HepG2 (cell line): ENCODE measurements at regions of chr3 and their contacts with region 1.

Region 1: GRCh38 chr3:110397115-110397514 is 674.5 kb upstream of the NECTIN3 start:
- DNase-seq: peak; percentile 97
- ATAC-seq: peak; percentile 97
- H3K4me3 ChIP-seq: no peak overlapping the region
- H3K27ac ChIP-seq: peak overlapping the region; percentile 73
- H3K4me1 ChIP-seq: peaks cover 31% of the 10 kb centered on the region
- H3K27me3 ChIP-seq: no peaks in the 10 kb centered on the region
- CTCF ChIP-seq: no peak
- EP300 ChIP-seq: peak in 1 of 2 experiments; percentile 94; a peak in 2 of 4 replicates
- POLR2A ChIP-seq: no peak
- RAD21 ChIP-seq: no peak

Region 2: DNA sequence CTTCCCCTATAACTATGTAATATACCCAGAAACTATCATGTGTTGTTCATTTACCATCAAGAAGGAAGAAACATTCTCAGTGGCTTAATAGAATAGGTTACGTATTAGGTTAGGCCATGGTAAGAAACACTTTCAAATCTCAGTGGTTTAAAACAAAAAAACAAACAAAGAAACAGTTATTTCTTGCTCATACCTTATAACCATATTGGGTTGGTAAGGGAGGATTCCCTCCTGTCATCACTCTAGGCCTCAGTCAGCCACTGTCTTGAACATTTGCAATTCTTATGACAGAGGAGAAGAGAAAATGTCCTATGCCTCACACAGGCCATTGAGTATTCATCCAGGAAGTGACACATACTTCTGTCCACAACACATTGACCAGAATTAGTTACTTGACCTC is 53.2 kb before region 1 on chr3:
- CTCF ChIA-PET with region 1: no interaction called
- POLR2A ChIA-PET with region 1: interaction called, 4 read pairs
- in situ Hi-C with region 1: no loop called
- intact Hi-C with region 1: loop called (anchors 1 kb)
- DNase-seq: peak; percentile 19
- ATAC-seq: peak; percentile 39
- H3K4me3 ChIP-seq: no peak overlapping the region
- H3K27ac ChIP-seq: peak overlapping the region; percentile 51
- H3K4me1 ChIP-seq: peaks cover 42% of the 10 kb centered on the region
- H3K27me3 ChIP-seq: no peaks in the 10 kb centered on the region
- CTCF ChIP-seq: no peak
- EP300 ChIP-seq: no peak; a peak in 1 of 4 replicates
- POLR2A ChIP-seq: no peak
- RAD21 ChIP-seq: no peak

Region 3: GRCh38 chr3:110436209-110436608 is 39.1 kb after region 1 on chr3:
- CTCF ChIA-PET with region 1: no interaction called
- POLR2A ChIA-PET with region 1: no interaction called
- in situ Hi-C with region 1: no loop called
- intact Hi-C with region 1: loop called (anchors 5 kb)
- DNase-seq: peak; percentile 68
- ATAC-seq: peak; percentile 84
- H3K4me3 ChIP-seq: no peak overlapping the region; a peak in 1 of 6 replicates
- H3K27ac ChIP-seq: no peak overlapping the region
- H3K4me1 ChIP-seq: peaks cover 26% of the 10 kb centered on the region
- H3K27me3 ChIP-seq: no peaks in the 10 kb centered on the region
- CTCF ChIP-seq: no peak
- EP300 ChIP-seq: 0 out of 4 replicates have a peak, but pooled peaks of 1 of the 2 experiments have one; percentile 22
- POLR2A ChIP-seq: no peak
- RAD21 ChIP-seq: no peak